K562 (cell line): ENCODE measurements at regions of chr7 and their contacts with region 1.

Region 1: GRCh38 chr7:3154912-3155494 is 111.3 kb upstream of the CARD11 start:
- DNase-seq: peak; percentile 43 to 63 (median 52)
- ATAC-seq: peak; percentile 69
- H3K4me3 ChIP-seq: no peak overlapping the region
- H3K27ac ChIP-seq: no peak overlapping the region
- H3K4me1 ChIP-seq: no peaks in the 10 kb centered on the region; a peak in 1 of 5 replicates
- H3K27me3 ChIP-seq: peaks cover 2 to 33% of the 10 kb centered on the region in 2 experiments; a peak in 4 of 5 replicates
- CTCF ChIP-seq: peak; percentile 60 to 82 (median 73); a peak in 5 of 6 replicates
- EP300 ChIP-seq: no peak
- POLR2A ChIP-seq: no peak
- RAD21 ChIP-seq: peak; percentile 73 to 90

Region 2: DNA sequence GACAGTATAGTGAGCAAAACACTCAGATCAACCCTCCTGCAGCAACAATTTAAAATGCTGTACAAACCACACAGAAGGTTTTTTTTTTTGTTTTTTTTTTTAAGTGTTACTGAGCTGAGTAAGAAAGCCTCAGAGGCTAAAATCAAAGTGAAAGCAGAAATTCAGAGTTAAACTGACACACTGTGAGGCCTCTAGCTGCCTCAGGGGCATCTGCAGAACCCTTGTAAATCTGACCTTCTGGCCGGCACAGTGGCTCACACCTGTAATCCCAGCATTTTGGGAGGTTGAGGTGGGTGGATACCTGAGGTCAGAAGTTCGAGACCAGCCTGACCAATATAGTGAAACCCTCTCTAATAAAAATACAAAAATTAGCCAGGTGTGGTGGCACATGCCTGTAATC is 303.5 kb before region 1 on chr7:
- CTCF ChIA-PET with region 1: no interaction called
- POLR2A ChIA-PET with region 1: no interaction called
- in situ Hi-C with region 1: no loop called
- intact Hi-C with region 1: no loop called
- DNase-seq: no peak
- ATAC-seq: no peak
- H3K4me3 ChIP-seq: no peak overlapping the region
- H3K27ac ChIP-seq: no peak overlapping the region
- H3K4me1 ChIP-seq: no peaks in the 10 kb centered on the region
- H3K27me3 ChIP-seq: no peaks in the 10 kb centered on the region; a peak in 1 of 5 replicates
- CTCF ChIP-seq: no peak
- EP300 ChIP-seq: no peak
- POLR2A ChIP-seq: no peak
- RAD21 ChIP-seq: no peak

Region 3: DNA sequence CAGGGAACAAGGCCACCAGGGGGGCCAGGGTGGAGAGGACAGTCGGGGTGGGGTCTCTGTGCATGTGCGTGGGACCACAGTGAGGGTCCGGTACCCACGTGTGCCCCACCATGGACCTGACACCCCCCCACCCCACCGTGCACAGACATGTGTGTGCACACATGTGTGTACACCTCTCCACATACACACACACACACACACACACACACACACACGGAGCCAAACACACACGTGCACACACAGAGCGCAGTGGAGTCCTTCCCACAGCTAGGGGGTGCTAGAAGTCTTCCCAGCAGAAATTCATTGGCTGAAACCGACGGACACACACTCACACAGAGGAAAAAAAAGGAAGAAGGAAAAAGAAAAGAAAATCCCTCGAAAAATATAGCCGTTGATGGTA is 268.1 kb before region 1 on chr7:
- CTCF ChIA-PET with region 1: interaction called, 27 read pairs
- POLR2A ChIA-PET with region 1: no interaction called
- in situ Hi-C with region 1: no loop called
- intact Hi-C with region 1: loop called (anchors 1 kb)
- DNase-seq: peak; percentile 69 to 79 (median 76)
- ATAC-seq: peak; percentile 95
- H3K4me3 ChIP-seq: no peak overlapping the region
- H3K27ac ChIP-seq: no peak overlapping the region
- H3K4me1 ChIP-seq: peaks cover 0 to 13% of the 10 kb centered on the region in 2 experiments; a peak in 2 of 5 replicates
- H3K27me3 ChIP-seq: peaks cover 13 to 34% of the 10 kb centered on the region in 2 experiments; a peak in 4 of 5 replicates
- CTCF ChIP-seq: peak; percentile 84 to 95 (median 86)
- EP300 ChIP-seq: no peak
- POLR2A ChIP-seq: no peak
- RAD21 ChIP-seq: peak; percentile 82 to 94

Region 4: DNA sequence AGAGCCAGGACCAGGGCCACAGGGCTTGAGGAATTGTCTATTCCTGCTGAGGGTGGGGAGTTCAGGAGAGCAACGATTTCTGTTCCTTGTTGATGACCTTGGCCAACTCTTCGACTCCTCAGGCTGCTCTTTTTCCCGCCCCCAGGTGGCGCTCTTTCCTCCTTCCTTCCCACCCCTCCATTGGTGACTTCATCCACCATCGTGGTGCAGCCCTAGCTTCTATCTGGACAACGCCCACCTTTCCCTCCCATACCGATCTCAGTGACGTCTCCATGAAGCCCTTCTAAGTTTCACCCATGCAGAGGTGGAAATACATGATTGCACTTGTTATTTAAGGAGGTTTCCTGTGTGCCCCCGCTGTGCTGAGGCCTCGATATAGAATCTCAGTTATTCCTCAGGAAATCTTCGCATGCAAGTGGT is 89.3 kb before region 1 on chr7:
- CTCF ChIA-PET with region 1: interaction called, 11 read pairs
- POLR2A ChIA-PET with region 1: no interaction called
- in situ Hi-C with region 1: no loop called
- intact Hi-C with region 1: loop called (anchors 2 kb)
- DNase-seq: peak; percentile 70 to 86 (median 82)
- ATAC-seq: peak; percentile 99
- H3K4me3 ChIP-seq: no peak overlapping the region
- H3K27ac ChIP-seq: no peak overlapping the region
- H3K4me1 ChIP-seq: no peaks in the 10 kb centered on the region
- H3K27me3 ChIP-seq: peaks cover 0 to 31% of the 10 kb centered on the region in 2 experiments; a peak in 2 of 5 replicates
- CTCF ChIP-seq: peak; percentile 72 to 79 (median 76)
- EP300 ChIP-seq: 0 out of 2 replicates have a peak, but pooled peaks have one; percentile 11
- POLR2A ChIP-seq: no peak
- RAD21 ChIP-seq: peak in 1 of 2 experiments; percentile 56; a peak in 3 of 4 replicates

Region 5: DNA sequence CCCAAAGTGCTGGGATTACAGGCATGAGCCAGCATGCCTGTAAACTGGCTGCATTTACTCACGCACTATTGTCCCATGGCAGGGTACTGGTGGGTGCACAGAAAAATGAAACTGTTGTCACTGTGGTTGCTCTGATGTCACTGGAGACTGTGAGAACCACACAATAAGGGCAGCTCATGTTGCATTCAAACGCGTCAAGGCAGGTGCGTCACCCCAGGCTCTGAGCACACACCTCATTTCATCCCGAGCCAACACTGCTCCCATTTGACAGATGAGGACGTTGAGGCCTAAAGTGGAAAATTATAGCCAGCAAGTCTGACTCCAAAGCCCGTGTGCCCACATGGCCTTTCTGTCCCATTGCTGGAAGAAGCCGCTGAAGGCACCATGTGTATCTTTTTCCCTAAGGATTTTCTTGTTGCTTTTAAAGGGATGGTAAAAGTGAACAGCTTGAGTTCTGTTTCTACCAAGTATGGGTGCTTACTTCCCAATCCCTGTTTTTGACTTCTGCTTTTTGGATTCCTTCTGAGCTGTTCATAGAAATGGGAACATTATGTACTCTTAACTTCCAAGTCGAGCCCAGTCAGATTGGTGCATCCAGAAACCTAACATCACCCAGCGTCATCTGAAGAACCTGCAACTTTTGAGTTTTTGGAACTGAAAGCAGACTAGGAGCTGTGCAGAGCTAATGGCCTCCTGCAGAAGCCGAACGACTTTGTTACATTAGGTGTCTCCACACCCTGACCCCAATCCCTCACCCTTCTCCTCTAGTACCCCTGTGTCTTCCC is 51.2 kb before region 1 on chr7:
- CTCF ChIA-PET with region 1: no interaction called
- POLR2A ChIA-PET with region 1: no interaction called
- in situ Hi-C with region 1: no loop called
- intact Hi-C with region 1: no loop called
- DNase-seq: no peak
- ATAC-seq: no peak
- H3K4me3 ChIP-seq: no peak overlapping the region
- H3K27ac ChIP-seq: no peak overlapping the region
- H3K4me1 ChIP-seq: no peaks in the 10 kb centered on the region
- H3K27me3 ChIP-seq: peaks cover 21 to 58% of the 10 kb centered on the region in 2 experiments; a peak in 4 of 5 replicates
- CTCF ChIP-seq: no peak
- EP300 ChIP-seq: no peak
- POLR2A ChIP-seq: no peak
- RAD21 ChIP-seq: no peak

Region 6: GRCh38 chr7:3370068-3370830 is 215.2 kb after region 1 on chr7:
- CTCF ChIA-PET with region 1: no interaction called
- POLR2A ChIA-PET with region 1: no interaction called
- in situ Hi-C with region 1: no loop called
- intact Hi-C with region 1: no loop called
- DNase-seq: no peak
- ATAC-seq: peak; percentile 72; the same call in 2 of the 3 replicates
- H3K4me3 ChIP-seq: no peak overlapping the region
- H3K27ac ChIP-seq: no peak overlapping the region
- H3K4me1 ChIP-seq: no peaks in the 10 kb centered on the region
- H3K27me3 ChIP-seq: peaks cover 5 to 7% of the 10 kb centered on the region in 2 experiments; a peak in 1 of 5 replicates
- CTCF ChIP-seq: no peak
- EP300 ChIP-seq: no peak
- POLR2A ChIP-seq: no peak
- RAD21 ChIP-seq: no peak